ENCODE measurements at regions of chr5 and their contacts with region 1.

Region 1: GRCh38 chr5:59188419-59189225 is 605.7 kb downstream of the RAB3C start:
- DNase-seq: no peak
- H3K4me3 ChIP-seq: peak overlapping the region; percentile 28; the same call in 1 of the 2 replicates
- H3K27ac ChIP-seq: no peak overlapping the region
- H3K27me3 ChIP-seq: no peaks in the 10 kb centered on the region
- CTCF ChIP-seq: peak; percentile 72

Region 2: DNA sequence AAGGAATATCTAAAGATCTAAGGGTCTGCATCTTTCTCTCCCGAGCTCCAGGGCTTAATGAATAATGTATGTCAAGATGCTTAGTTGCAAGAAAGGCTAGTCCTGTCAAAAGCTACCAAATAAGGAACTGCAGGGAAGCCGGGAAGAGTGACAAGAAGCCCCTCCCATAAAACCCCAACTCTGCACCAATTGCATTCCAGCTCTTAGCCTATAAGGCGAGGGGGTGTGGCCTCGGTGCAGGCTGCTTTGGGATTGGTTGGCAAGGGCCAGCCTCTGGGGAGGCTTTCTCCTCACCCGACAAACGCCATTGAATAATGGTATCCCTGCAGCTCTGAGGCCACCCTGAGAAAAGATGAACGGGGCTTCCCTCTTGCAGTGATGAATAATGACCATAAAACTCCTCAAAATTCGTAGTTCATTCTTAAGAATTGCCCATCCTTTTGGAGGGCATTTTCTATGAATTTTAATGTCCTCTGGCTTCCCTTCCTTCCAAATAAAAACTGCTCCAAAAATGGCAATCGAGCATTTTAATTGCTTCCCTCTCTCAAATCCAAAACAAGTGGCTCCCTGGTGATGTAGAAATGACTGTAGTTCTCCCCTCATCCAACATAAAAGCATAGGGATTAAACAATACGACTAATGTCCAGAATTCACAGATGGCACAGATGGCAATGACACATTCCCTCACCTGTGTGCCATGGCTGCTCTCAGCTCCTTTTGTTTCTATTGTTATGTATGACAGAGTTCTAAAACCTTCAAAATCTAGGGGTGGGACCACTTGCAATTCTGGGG is 188.6 kb before region 1 on chr5:
- CTCF ChIA-PET with region 1: interaction called, 10 read pairs
- POLR2A ChIA-PET with region 1: no interaction called
- DNase-seq: no peak
- H3K4me3 ChIP-seq: no peak overlapping the region
- H3K27ac ChIP-seq: no peak overlapping the region
- H3K27me3 ChIP-seq: no peaks in the 10 kb centered on the region
- CTCF ChIP-seq: no peak

Region 3: DNA sequence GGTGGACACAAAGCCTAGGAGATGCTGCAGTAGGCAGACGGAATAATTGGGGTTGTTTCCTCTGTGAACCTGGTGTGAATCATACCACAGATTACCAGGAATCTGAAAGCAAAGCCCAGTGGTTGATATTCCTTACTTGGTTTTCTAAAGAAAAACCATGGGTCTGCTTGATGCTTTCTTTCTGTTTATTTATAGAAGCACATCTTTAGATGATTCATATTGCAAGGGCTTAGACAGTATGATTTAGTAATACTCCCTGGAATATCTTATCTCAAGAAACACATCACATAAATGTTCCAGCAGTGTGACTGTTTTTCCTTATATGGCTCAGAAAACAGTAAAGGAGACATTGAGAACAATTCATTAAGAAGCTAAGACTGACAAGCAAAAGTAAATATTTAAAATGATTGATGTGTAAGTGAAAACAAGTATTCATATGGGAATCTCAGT is 17.5 kb after region 1 on chr5:
- CTCF ChIA-PET with region 1: interaction called, 22 read pairs
- POLR2A ChIA-PET with region 1: no interaction called
- DNase-seq: no peak
- H3K4me3 ChIP-seq: no peak overlapping the region
- H3K27ac ChIP-seq: no peak overlapping the region
- H3K27me3 ChIP-seq: no peaks in the 10 kb centered on the region
- CTCF ChIP-seq: no peak

Region 4: GRCh38 chr5:59218424-59219045 is 29.9 kb after region 1 on chr5:
- CTCF ChIA-PET with region 1: interaction called, 23 read pairs
- POLR2A ChIA-PET with region 1: no interaction called
- DNase-seq: no peak
- H3K4me3 ChIP-seq: no peak overlapping the region
- H3K27ac ChIP-seq: no peak overlapping the region
- H3K27me3 ChIP-seq: peaks cover 2% of the 10 kb centered on the region
- CTCF ChIP-seq: peak; percentile 37

Region 5: GRCh38 chr5:59358005-59358861 is 169.6 kb after region 1 on chr5:
- CTCF ChIA-PET with region 1: interaction called, 360 read pairs
- POLR2A ChIA-PET with region 1: no interaction called
- DNase-seq: no peak
- H3K4me3 ChIP-seq: no peak overlapping the region
- H3K27ac ChIP-seq: no peak overlapping the region
- H3K27me3 ChIP-seq: no peaks in the 10 kb centered on the region
- CTCF ChIP-seq: no peak

Region 6: GRCh38 chr5:59380350-59380951 is 191.8 kb after region 1 on chr5:
- CTCF ChIA-PET with region 1: interaction called, 225 read pairs
- POLR2A ChIA-PET with region 1: no interaction called
- DNase-seq: peak; percentile 21
- H3K4me3 ChIP-seq: no peak overlapping the region
- H3K27ac ChIP-seq: no peak overlapping the region
- H3K27me3 ChIP-seq: no peaks in the 10 kb centered on the region
- CTCF ChIP-seq: peak; percentile 57

Region 7: GRCh38 chr5:59496524-59497134 is 308.0 kb after region 1 on chr5:
- CTCF ChIA-PET with region 1: interaction called, 12 read pairs
- POLR2A ChIA-PET with region 1: no interaction called
- DNase-seq: no peak
- H3K4me3 ChIP-seq: no peak overlapping the region
- H3K27ac ChIP-seq: no peak overlapping the region
- H3K27me3 ChIP-seq: peaks cover 2% of the 10 kb centered on the region
- CTCF ChIP-seq: peak; percentile 66

Measured in AG04450 (cell line).